ENCODE measurements at regions of chr2 and their contacts with region 1.

Region 1: GRCh38 chr2:45497355-45497754 is 113.7 kb downstream of the SRBD1 start:
- DNase-seq: no peak
- ATAC-seq: no peak
- H3K4me3 ChIP-seq: no peak overlapping the region
- H3K27ac ChIP-seq: no peak overlapping the region
- H3K4me1 ChIP-seq: no peaks in the 10 kb centered on the region
- H3K27me3 ChIP-seq: no peaks in the 10 kb centered on the region
- CTCF ChIP-seq: no peak

Region 2: GRCh38 chr2:44918095-44918775 is 579.1 kb before region 1 on chr2:
- intact Hi-C with region 1: no loop called
- DNase-seq: no peak
- ATAC-seq: no peak
- H3K4me3 ChIP-seq: no peak overlapping the region
- H3K27ac ChIP-seq: no peak overlapping the region
- H3K4me1 ChIP-seq: no peaks in the 10 kb centered on the region
- H3K27me3 ChIP-seq: no peaks in the 10 kb centered on the region
- CTCF ChIP-seq: no peak

Region 3: GRCh38 chr2:44975571-44976450 is 521.5 kb before region 1 on chr2:
- intact Hi-C with region 1: loop called in 2 of 3 experiments (anchors 5 kb)
- DNase-seq: no peak
- ATAC-seq: no peak
- H3K4me3 ChIP-seq: no peak overlapping the region
- H3K27ac ChIP-seq: no peak overlapping the region
- H3K4me1 ChIP-seq: no peaks in the 10 kb centered on the region
- H3K27me3 ChIP-seq: no peaks in the 10 kb centered on the region
- CTCF ChIP-seq: no peak

Region 4: DNA sequence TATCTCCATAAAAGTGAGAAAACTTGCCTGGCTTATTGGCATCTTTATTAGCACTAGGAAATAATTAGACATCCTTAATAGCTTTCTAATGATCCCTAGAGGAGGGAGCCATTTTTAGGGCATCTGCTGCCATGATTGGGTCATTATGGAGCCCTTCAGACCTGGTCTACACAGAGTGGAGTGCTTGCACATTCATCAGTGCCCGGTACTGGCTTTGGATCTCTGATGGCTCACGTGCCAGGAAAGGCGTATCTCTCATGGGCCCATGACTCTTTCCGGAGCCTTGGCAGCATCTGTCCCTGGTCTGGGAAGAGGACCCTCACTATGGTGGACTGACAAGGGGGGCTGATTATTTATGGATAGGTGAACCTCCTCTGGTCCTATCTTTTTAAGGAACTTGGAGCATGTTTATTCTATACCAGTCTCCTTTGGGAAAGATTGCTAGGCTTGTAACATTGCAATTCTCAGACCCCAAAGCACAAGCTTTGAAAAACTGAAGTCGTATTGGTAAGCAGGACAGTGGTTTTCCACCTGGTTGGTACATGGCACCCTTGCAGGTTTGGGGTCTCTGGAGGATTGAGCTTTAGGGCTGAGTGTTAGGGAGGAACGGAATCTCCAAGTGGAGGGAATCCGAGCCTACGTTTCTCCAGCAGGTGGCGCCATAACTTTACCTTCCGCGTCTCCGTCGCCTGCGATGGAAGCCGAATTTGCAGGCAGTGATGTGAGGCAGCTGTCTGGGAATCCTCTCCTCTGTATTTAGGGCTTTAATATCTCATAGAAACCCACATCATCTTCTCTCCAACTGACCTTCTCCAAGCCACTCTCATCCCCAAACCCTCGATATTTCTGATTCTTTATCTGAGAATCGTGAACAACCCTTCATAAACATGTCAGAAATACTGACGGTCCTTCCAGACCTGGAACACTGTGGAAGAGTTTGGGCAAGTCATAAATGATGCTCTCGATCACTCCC is 515.9 kb before region 1 on chr2:
- intact Hi-C with region 1: loop called in 2 of 3 experiments (anchors 5 kb)
- DNase-seq: peak; percentile 52 to 89 (median 72)
- ATAC-seq: peak; percentile 89 to 96 (median 94)
- H3K4me3 ChIP-seq: no peak overlapping the region
- H3K27ac ChIP-seq: no peak overlapping the region
- H3K4me1 ChIP-seq: no peaks in the 10 kb centered on the region
- H3K27me3 ChIP-seq: no peaks in the 10 kb centered on the region
- CTCF ChIP-seq: peak; percentile 71 to 87 (median 77)

Region 5: GRCh38 chr2:45650851-45651414 is 153.6 kb after region 1 on chr2:
- intact Hi-C with region 1: no loop called
- DNase-seq: peak; percentile 88 to 95 (median 93)
- ATAC-seq: peak; percentile 76 to 84 (median 79)
- H3K4me3 ChIP-seq: peak overlapping the region; percentile 76 to 94 (median 86)
- H3K27ac ChIP-seq: peak overlapping the region; percentile 92 to 99 (median 98)
- H3K4me1 ChIP-seq: peaks cover 0 to 4% (median 3%) of the 10 kb centered on the region in 3 donors
- H3K27me3 ChIP-seq: no peaks in the 10 kb centered on the region
- CTCF ChIP-seq: peak in 1 of 4 donors; percentile 9

Measured in pancreas (tissue), 10 donors.